AG04450 (cell line): ENCODE measurements at regions of chr2 and their contacts with region 1.

Region 1: GRCh38 chr2:127479219-127479825 is 47.0 kb downstream of the IWS1 start:
- DNase-seq: peak; percentile 27
- H3K4me3 ChIP-seq: no peak overlapping the region
- H3K27ac ChIP-seq: no peak overlapping the region
- H3K27me3 ChIP-seq: no peaks in the 10 kb centered on the region
- CTCF ChIP-seq: peak; percentile 78

Region 2: DNA sequence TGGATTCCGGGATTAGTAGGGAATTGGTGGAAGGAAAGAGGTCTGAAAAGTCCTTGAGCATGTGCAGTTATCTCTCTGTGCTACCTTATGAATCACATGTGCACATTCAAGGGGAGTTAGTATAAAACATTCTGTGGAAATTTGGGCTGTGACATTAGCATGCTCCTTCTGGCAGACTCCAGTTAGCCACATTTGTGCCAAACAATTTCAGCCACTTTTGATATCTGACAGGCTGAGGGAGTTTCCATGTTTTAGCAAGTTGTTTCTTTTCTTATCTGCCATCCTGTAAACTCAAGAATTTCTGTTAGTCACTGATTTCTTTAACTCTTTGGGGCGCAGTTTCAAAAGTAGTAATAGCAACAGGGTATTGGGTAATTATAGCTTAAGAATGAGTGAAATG is 851.7 kb before region 1 on chr2:
- CTCF ChIA-PET with region 1: no interaction called
- POLR2A ChIA-PET with region 1: no interaction called
- DNase-seq: no peak
- H3K4me3 ChIP-seq: no peak overlapping the region
- H3K27ac ChIP-seq: no peak overlapping the region
- H3K27me3 ChIP-seq: no peaks in the 10 kb centered on the region
- CTCF ChIP-seq: no peak

Region 3: GRCh38 chr2:127305990-127306585 is 173.2 kb before region 1 on chr2:
- CTCF ChIA-PET with region 1: interaction called, 13 read pairs
- POLR2A ChIA-PET with region 1: no interaction called
- DNase-seq: no peak
- H3K4me3 ChIP-seq: no peak overlapping the region
- H3K27ac ChIP-seq: no peak overlapping the region
- H3K27me3 ChIP-seq: no peaks in the 10 kb centered on the region
- CTCF ChIP-seq: no peak

Region 4: DNA sequence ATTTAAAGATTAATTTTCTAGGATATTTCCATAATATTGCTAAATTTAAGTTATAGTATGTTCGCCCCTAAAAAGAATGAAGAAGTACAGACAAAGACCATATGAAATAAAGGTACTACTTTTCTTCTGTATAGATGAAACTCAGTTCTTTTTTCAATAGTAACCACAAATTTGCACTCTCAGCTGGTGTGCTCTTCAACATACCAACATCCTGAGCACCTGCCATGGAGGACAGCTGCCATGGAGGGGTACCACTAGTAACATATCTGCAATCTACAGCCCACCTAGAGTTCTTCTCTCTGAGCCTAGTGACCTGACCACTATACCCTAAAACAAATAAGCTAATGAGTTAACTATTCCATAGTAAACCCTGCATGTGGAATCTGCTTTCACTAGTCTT is 148.6 kb before region 1 on chr2:
- CTCF ChIA-PET with region 1: interaction called, 231 read pairs
- POLR2A ChIA-PET with region 1: no interaction called
- DNase-seq: no peak
- H3K4me3 ChIP-seq: no peak overlapping the region
- H3K27ac ChIP-seq: no peak overlapping the region
- H3K27me3 ChIP-seq: no peaks in the 10 kb centered on the region
- CTCF ChIP-seq: no peak

Region 5: GRCh38 chr2:127463155-127463991 is 15.9 kb before region 1 on chr2:
- CTCF ChIA-PET with region 1: interaction called, 11 read pairs
- POLR2A ChIA-PET with region 1: no interaction called
- DNase-seq: no peak
- H3K4me3 ChIP-seq: no peak overlapping the region
- H3K27ac ChIP-seq: no peak overlapping the region
- H3K27me3 ChIP-seq: no peaks in the 10 kb centered on the region
- CTCF ChIP-seq: no peak